B cell (primary cell): ENCODE measurements at regions of chr7 and their contacts with region 1.

Region 1: GRCh38 chr7:135620980-135621850 is 41.1 kb upstream of the STMP1 start:
- DNase-seq: peak; percentile 54
- ATAC-seq: no peak
- H3K4me3 ChIP-seq: no peak overlapping the region
- H3K4me3 Mint-ChIP-seq: no peak overlapping the region
- H3K27ac ChIP-seq: no peak overlapping the region
- H3K27ac Mint-ChIP-seq: no peak overlapping the region
- H3K4me1 ChIP-seq: no peaks in the 10 kb centered on the region
- H3K4me1 Mint-ChIP-seq: no peaks in the 10 kb centered on the region
- H3K27me3 ChIP-seq: no peaks in the 10 kb centered on the region
- H3K27me3 Mint-ChIP-seq: no peaks in the 10 kb centered on the region
- CTCF ChIP-seq: peak; percentile 99

Region 2: DNA sequence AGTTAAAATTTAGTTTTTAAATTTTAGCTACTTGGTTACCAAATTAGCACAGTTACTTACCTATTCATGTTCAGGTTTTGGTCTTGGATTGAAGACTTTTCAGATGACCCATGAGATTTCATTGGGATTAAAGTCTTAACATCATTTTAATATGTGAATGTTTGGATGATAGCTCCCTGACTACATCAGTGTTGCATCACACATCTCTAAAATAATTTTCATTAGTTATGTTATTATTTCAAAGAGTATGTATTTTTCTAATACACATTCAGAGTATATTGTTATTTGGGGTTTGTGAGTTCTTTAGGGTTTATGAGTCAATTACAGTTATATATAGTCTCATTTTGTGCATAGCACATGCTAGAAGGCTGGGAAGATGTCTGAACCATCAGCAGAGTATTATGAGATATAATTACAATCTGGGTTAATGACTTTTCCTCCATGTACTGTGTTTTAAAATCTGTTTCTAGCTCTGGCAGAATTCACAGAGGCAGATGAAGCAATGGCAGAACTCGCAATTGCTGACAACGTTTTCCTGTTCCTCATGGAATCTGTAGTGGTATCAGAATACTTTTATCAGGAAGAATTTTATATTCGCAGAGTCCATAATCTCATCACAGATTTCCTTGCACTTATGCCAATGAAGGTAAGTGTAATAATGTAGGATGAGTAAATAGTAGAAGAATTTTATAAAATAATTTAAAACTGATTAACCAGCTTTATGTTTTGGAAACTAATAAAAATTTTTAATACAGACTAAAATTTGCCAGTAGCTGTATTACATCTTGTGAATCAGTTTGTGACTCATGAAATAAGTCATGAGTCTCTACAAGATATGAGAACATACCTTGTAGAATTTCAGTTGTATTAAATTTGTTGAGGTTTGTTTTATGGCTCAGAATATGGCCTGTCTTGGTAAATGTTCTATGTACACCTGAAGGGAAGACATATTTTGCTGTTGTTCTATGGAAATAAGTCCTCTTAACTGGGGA is 36.6 kb before region 1 on chr7:
- CTCF ChIA-PET with region 1: interaction called, 4 read pairs
- POLR2A ChIA-PET with region 1: no interaction called
- intact Hi-C with region 1: loop called (anchors 5 kb)
- DNase-seq: no peak
- ATAC-seq: no peak
- H3K4me3 ChIP-seq: no peak overlapping the region
- H3K4me3 Mint-ChIP-seq: no peak overlapping the region
- H3K27ac ChIP-seq: no peak overlapping the region
- H3K27ac Mint-ChIP-seq: no peak overlapping the region
- H3K4me1 ChIP-seq: no peaks in the 10 kb centered on the region
- H3K4me1 Mint-ChIP-seq: no peaks in the 10 kb centered on the region
- H3K27me3 ChIP-seq: no peaks in the 10 kb centered on the region
- H3K27me3 Mint-ChIP-seq: no peaks in the 10 kb centered on the region
- CTCF ChIP-seq: no peak

Region 3: GRCh38 chr7:135601182-135601581 is 20.0 kb before region 1 on chr7:
- CTCF ChIA-PET with region 1: interaction called, 3 read pairs
- POLR2A ChIA-PET with region 1: no interaction called
- intact Hi-C with region 1: loop called (anchors 2 kb)
- DNase-seq: no peak
- ATAC-seq: no peak
- H3K4me3 ChIP-seq: no peak overlapping the region
- H3K4me3 Mint-ChIP-seq: no peak overlapping the region
- H3K27ac ChIP-seq: no peak overlapping the region
- H3K27ac Mint-ChIP-seq: no peak overlapping the region
- H3K4me1 ChIP-seq: no peaks in the 10 kb centered on the region
- H3K4me1 Mint-ChIP-seq: no peaks in the 10 kb centered on the region
- H3K27me3 ChIP-seq: no peaks in the 10 kb centered on the region
- H3K27me3 Mint-ChIP-seq: no peaks in the 10 kb centered on the region
- CTCF ChIP-seq: no peak